ENCODE measurements at regions of chrX and their contacts with region 1.

Region 1: DNA sequence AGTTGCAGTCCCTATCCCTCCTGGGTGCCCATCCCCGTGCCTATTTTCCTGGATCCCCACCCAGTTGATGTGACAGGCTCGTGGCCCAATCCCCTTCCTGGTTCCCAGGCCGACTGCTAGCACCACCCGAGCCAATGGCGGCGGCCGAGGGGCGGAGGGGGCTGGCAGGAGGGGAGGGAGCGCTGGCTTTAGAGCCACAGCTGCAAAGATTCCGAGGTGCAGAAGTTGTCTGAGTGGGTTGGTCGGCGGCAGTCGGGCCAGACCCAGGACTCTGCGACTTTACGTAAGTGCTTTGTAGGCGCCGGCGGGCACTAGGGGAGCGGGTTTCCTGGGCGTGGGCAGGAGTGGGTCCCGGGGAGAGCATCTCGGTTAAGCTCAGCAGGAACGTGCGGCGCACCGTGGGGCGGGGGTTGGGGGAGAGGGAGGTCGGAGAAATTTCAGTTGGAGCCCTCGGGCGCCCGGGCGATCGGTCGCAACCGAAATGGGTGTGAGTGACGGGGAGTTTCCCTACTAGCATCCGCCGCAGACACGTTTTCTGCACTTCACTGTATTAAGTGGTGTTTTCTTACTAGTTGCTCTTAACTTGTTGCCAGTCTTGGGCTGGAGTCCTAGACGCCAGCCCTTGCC is at the start of gene PLS3:
- DNase-seq: no peak
- ATAC-seq: peak; percentile 76
- H3K4me3 ChIP-seq: peak within 1 kb of the TSS; percentile 25
- H3K27ac ChIP-seq: peak within 1 kb of the TSS; percentile 42; the same call in 1 of the 2 replicates
- H3K4me1 ChIP-seq: no peaks in the 10 kb centered on the region
- H3K27me3 ChIP-seq: peaks cover 0 to 3% of the 10 kb centered on the region in 2 experiments; a peak in 3 of 4 replicates
- CTCF ChIP-seq: no peak
- EP300 ChIP-seq: no peak
- POLR2A ChIP-seq: no peak
- RAD21 ChIP-seq: no peak
- polyA plus RNA-seq, gene PLS3: 122 to 169 TPM

Region 2: DNA sequence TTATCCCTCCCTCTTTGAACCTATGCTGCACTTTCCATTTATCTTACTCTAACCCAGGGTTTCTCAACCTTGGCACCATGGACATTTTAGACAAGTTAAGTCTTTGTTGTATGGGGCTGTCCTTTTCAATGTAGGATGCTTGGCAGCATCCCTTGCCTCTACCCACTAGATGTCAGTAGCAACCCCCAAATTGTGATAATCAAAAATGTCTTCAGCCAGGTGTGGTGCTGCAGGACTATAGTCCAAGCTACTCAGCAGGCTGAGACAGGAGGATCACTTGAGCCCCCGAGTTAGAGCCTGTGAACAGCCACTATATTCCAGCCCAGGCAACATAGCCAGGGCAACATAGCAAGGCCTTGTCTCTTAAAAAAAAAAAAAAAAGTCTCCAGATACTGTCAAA is 334.2 kb before region 1 on chrX:
- CTCF ChIA-PET with region 1: no interaction called
- POLR2A ChIA-PET with region 1: no interaction called
- RAD21 ChIA-PET with region 1: no interaction called
- SMC1A ChIA-PET with region 1: no interaction called
- in situ Hi-C with region 1: no loop called
- intact Hi-C with region 1: loop called (anchors 10 kb)
- DNase-seq: no peak
- ATAC-seq: peak; percentile 94
- H3K4me3 ChIP-seq: no peak overlapping the region
- H3K27ac ChIP-seq: no peak overlapping the region
- H3K4me1 ChIP-seq: no peaks in the 10 kb centered on the region
- H3K27me3 ChIP-seq: no peaks in the 10 kb centered on the region; a peak in 1 of 4 replicates
- CTCF ChIP-seq: peak; percentile 23 to 61 (median 51); a peak in 3 of 6 replicates
- EP300 ChIP-seq: no peak
- POLR2A ChIP-seq: no peak
- RAD21 ChIP-seq: peak; percentile 61; the same call in 1 of the 2 replicates

Region 3: DNA sequence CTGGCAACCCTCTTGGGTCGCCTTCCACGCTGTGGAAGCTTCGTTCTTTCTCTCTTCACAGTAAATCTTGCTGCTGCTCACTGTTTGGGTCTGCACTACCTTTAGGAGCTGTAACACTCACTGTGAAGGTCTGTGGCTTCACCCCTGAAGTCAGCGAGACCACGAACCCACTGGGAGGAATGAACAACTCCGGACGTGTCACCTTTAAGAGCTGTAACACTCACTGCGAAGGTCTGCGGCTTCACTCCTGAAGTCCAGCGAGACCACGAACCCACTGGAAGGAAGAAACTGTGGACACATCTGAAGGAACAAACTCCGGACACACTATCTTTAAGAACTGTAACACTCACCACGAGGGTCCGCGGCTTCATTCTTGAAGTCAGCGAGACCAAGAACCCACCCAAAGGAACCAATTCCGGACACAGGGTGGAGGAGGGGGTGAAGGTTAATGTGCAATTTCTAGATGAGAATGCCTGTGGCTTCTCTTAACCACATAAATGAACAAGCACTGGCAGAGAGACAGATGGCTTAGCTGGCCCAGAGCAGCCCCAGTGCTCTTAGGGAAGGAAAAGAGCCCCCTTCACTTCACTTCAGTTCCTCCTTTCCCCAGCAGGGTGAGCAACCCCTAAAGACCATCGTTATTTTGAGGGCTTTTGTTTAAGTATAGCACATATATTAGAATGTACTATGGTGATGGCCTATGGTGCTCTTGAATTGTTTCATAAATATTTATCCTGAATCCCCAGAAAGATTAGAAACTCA is 198.6 kb before region 1 on chrX:
- CTCF ChIA-PET with region 1: interaction called, 33 read pairs
- POLR2A ChIA-PET with region 1: interaction called, 3 read pairs
- RAD21 ChIA-PET with region 1: interaction called, 19 read pairs
- SMC1A ChIA-PET with region 1: interaction called, 31 read pairs
- in situ Hi-C with region 1: no loop called
- intact Hi-C with region 1: loop called (anchors 5 kb)
- DNase-seq: no peak
- ATAC-seq: peak; percentile 91
- H3K4me3 ChIP-seq: no peak overlapping the region
- H3K27ac ChIP-seq: no peak overlapping the region
- H3K4me1 ChIP-seq: no peaks in the 10 kb centered on the region
- H3K27me3 ChIP-seq: no peaks in the 10 kb centered on the region; a peak in 1 of 4 replicates
- CTCF ChIP-seq: peak in 1 of 3 experiments; percentile 13; a peak in 1 of 6 replicates
- EP300 ChIP-seq: no peak
- POLR2A ChIP-seq: no peak
- RAD21 ChIP-seq: no peak

Region 4: GRCh38 chrX:115419069-115419468 is 142.0 kb before region 1 on chrX:
- CTCF ChIA-PET with region 1: no interaction called
- POLR2A ChIA-PET with region 1: no interaction called
- RAD21 ChIA-PET with region 1: no interaction called
- SMC1A ChIA-PET with region 1: no interaction called
- in situ Hi-C with region 1: no loop called
- intact Hi-C with region 1: no loop called
- DNase-seq: no peak
- ATAC-seq: no peak
- H3K4me3 ChIP-seq: no peak overlapping the region
- H3K27ac ChIP-seq: no peak overlapping the region
- H3K4me1 ChIP-seq: no peaks in the 10 kb centered on the region
- H3K27me3 ChIP-seq: no peaks in the 10 kb centered on the region
- CTCF ChIP-seq: no peak
- EP300 ChIP-seq: no peak
- POLR2A ChIP-seq: no peak
- RAD21 ChIP-seq: no peak

Region 5: DNA sequence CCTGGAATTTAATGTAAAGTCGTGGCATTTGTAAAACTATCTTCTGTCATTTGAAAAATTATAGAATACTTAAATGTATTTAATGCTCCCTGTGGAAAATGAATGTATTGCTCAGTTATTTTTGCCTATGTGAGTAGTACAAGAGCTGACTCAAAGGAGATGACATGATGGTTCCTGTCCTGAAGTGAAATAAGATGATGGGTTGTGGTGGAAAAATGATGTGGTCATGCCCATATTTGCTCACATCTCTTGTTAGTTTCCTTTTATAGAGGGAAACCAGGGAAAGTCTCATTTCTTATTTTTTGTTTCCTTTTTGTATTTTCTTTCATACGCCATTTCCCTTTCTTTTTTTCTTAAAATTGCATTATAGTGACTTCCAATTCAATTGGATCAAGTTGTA is 23.6 kb after region 1 on chrX:
- CTCF ChIA-PET with region 1: interaction called, 11 read pairs
- POLR2A ChIA-PET with region 1: interaction called, 13 read pairs
- RAD21 ChIA-PET with region 1: interaction called, 35 read pairs
- SMC1A ChIA-PET with region 1: interaction called, 14 read pairs
- in situ Hi-C with region 1: no loop called
- intact Hi-C with region 1: no loop called
- DNase-seq: no peak
- ATAC-seq: peak; percentile 79
- H3K4me3 ChIP-seq: no peak overlapping the region
- H3K27ac ChIP-seq: no peak overlapping the region
- H3K4me1 ChIP-seq: no peaks in the 10 kb centered on the region
- H3K27me3 ChIP-seq: no peaks in the 10 kb centered on the region
- CTCF ChIP-seq: no peak
- EP300 ChIP-seq: no peak
- POLR2A ChIP-seq: no peak
- RAD21 ChIP-seq: no peak

Region 6: GRCh38 chrX:115642895-115643530 is 81.9 kb after region 1 on chrX:
- CTCF ChIA-PET with region 1: interaction called, 37 read pairs
- POLR2A ChIA-PET with region 1: no interaction called
- RAD21 ChIA-PET with region 1: interaction called, 18 read pairs
- SMC1A ChIA-PET with region 1: interaction called, 56 read pairs
- in situ Hi-C with region 1: no loop called
- intact Hi-C with region 1: loop called (anchors 1 kb)
- DNase-seq: peak; percentile 23
- ATAC-seq: peak; percentile 72
- H3K4me3 ChIP-seq: no peak overlapping the region
- H3K27ac ChIP-seq: no peak overlapping the region
- H3K4me1 ChIP-seq: no peaks in the 10 kb centered on the region
- H3K27me3 ChIP-seq: no peaks in the 10 kb centered on the region
- CTCF ChIP-seq: peak; percentile 76 to 86 (median 83)
- EP300 ChIP-seq: no peak
- POLR2A ChIP-seq: no peak
- RAD21 ChIP-seq: peak; percentile 90

Measured in GM12878 (cell line).